Heart left ventricle (tissue), 16 donors: ENCODE measurements at regions of chr9 and their contacts with region 1.

Region 1: DNA sequence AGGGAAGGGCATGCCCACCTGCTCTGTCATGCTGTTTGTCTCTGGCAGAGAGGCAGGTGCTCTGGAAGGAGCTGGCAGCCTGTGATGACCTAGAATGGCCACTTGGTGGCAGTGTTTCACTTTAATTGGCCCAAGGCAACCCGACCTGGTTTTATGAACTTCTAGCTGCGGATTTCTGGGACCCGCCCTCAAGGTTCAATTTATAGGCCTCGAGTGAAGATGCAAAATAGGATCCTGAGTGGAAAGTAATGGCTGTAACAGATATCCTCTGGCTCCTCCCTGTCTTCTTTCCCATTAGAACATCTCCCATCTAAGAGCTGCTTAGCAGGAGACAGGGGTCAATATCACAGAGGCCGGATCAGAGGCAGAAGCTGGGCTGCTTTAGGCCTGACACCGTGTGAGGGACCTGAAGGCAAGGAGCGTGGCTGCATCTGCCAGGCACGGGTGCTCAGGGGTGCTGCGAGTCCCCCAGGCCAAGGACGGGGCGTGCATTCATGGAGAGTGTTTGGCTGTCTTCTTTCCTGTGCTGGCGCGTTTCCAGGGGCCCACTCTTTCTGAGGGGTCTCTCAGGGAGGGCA is 56.7 kb upstream of the SLC28A3 start:
- DNase-seq: peak in 4 of 5 donors; percentile 37 to 63 (median 54)
- ATAC-seq: peak in 3 of 4 donors; percentile 80 to 84 (median 81)
- H3K4me3 ChIP-seq: no peak overlapping the region
- H3K27ac ChIP-seq: no peak overlapping the region
- H3K4me1 ChIP-seq: peaks cover 0 to 9% (median 0%) of the 10 kb centered on the region in 12 donors
- H3K27me3 ChIP-seq: peaks cover 0 to 14% (median 0%) of the 10 kb centered on the region in 9 donors
- CTCF ChIP-seq: peak; percentile 87 to 96 (median 93)
- POLR2A ChIP-seq: no peak

Region 2: DNA sequence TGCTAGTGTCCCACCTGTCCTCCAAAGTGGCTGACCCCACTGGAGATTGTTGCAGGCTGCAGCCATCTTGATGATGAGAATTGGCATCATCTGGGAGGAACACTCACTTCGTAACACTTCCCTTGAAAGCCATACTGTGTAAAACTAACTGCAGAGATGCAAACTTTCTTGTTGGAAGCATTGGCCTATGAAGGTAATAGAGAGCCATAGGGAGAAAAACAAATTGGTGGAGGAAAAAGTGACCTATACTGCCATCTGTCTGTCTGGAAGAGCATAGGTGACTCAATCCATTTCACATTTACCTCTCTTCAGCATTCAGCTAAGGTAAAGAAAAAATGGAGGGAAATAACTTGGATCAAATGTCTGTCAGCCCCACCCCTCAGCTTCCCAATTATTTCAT is 745.7 kb after region 1 on chr9:
- intact Hi-C with region 1: loop called in 6 of 10 experiments (anchors 5 to 10 kb)
- DNase-seq: no peak
- ATAC-seq: no peak
- H3K4me3 ChIP-seq: no peak overlapping the region
- H3K27ac ChIP-seq: no peak overlapping the region
- H3K4me1 ChIP-seq: no peaks in the 10 kb centered on the region
- H3K27me3 ChIP-seq: no peaks in the 10 kb centered on the region
- CTCF ChIP-seq: peak in 11 of 12 donors; percentile 20 to 54 (median 37)
- POLR2A ChIP-seq: no peak

Region 3: DNA sequence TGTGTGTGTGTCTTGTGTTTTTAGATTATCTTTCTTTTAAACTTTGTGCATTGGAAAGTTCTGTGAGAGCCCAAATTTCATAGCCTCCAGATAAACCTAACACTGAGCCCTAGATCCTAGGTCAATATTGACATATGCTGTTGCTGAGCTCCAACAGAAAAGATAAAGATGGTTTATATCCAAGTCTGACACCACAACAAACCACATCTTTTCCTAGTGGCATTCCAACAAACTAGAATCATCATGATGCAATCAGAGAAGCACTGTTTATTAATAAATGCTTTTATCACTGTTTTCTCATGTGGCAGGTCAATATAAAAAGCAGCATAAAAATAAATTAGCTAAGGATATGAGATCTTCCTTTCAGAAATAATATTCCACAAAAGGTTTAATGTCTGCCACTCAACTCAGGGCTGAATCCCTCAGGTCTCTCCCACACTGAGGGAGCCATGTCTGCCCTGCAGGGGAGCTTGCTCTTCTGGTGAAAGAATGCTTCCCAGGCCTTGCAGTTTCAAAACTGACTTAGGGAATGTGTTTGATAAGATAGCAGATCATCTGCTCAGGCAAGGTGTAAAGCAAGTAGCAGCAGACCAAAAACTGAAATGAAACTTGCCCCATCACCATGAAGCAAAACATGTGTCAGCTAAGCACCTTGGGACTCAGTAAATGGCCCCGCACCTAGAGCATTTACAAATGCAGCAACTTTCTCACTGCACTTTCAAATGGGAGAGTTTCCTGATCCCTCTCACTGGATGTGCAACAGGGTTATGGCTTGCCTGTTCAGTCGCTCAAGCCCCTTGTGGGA is 851.5 kb after region 1 on chr9:
- intact Hi-C with region 1: loop called in 1 of 10 experiments (anchors 5 kb)
- DNase-seq: no peak
- ATAC-seq: peak in 2 of 4 donors; percentile 32 to 44
- H3K4me3 ChIP-seq: no peak overlapping the region
- H3K27ac ChIP-seq: no peak overlapping the region
- H3K4me1 ChIP-seq: peaks cover 0 to 7% (median 0%) of the 10 kb centered on the region in 12 donors
- H3K27me3 ChIP-seq: no peaks in the 10 kb centered on the region
- CTCF ChIP-seq: no peak
- POLR2A ChIP-seq: no peak

Region 4: GRCh38 chr9:85258823-85259370 is 861.7 kb after region 1 on chr9:
- intact Hi-C with region 1: loop called in 8 of 10 experiments (anchors 2 to 10 kb)
- DNase-seq: peak in 4 of 5 donors; percentile 22 to 53 (median 45)
- ATAC-seq: peak; percentile 77 to 88 (median 87)
- H3K4me3 ChIP-seq: no peak overlapping the region
- H3K27ac ChIP-seq: no peak overlapping the region
- H3K4me1 ChIP-seq: peaks cover 0 to 6% (median 0%) of the 10 kb centered on the region in 12 donors
- H3K27me3 ChIP-seq: peaks cover 0 to 7% (median 0%) of the 10 kb centered on the region in 9 donors
- CTCF ChIP-seq: peak; percentile 42 to 74 (median 67)
- POLR2A ChIP-seq: no peak

Region 5: GRCh38 chr9:85425153-85425611 is 1027.9 kb after region 1 on chr9:
- intact Hi-C with region 1: loop called in 1 of 10 experiments (anchors 10 kb)
- DNase-seq: peak in 4 of 5 donors; percentile 34 to 54 (median 42)
- ATAC-seq: peak in 2 of 4 donors; percentile 42 to 51
- H3K4me3 ChIP-seq: no peak overlapping the region
- H3K27ac ChIP-seq: no peak overlapping the region
- H3K4me1 ChIP-seq: peaks cover 0 to 3% (median 0%) of the 10 kb centered on the region in 12 donors
- H3K27me3 ChIP-seq: peaks cover 0 to 10% (median 0%) of the 10 kb centered on the region in 9 donors
- CTCF ChIP-seq: peak; percentile 33 to 70 (median 54)
- POLR2A ChIP-seq: no peak

Region 6: DNA sequence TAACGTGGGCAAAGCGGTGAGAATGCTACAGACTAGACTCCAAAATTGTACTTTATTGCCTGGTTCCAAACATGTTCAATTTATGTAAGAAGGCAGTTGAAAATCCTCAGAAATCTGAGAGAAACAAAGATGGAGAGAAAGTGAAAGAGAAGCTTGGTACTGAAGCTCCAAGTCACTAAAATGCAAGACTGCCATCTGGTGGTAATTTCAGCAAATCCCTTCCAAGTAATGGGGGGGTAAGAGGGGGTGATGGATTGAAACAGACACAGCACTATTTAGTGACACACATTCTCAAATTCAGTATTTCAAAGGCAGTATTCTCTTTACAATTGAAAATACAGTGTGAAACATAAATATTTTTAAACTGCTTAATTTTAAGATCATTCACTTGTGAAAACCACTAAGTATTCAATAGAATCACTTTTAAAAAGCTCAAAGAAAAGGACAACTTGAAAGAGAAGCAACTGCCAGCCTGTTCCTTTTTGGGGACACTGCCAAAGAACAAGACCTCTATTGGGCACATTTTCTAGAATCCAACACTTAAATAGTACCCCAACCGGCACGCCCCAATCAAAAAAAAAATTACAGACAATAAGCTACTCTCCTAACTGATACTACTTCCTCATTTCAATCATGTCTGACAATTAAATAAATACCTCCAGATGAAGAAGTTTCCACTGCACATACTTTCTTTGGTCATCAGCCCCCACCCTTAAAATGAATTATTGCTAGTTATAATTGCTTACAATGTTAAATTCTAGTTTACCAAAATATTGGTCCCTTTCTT is 1213.0 kb after region 1 on chr9:
- intact Hi-C with region 1: loop called in 9 of 10 experiments (anchors 2 to 10 kb)
- DNase-seq: no peak
- ATAC-seq: peak in 3 of 4 donors; percentile 64 to 78 (median 73)
- H3K4me3 ChIP-seq: peak overlapping the region in 7 of 12 donors; percentile 5 to 46 (median 31)
- H3K27ac ChIP-seq: peak overlapping the region in 1 of 12 donors; percentile 18
- H3K4me1 ChIP-seq: peaks cover 0 to 7% (median 0%) of the 10 kb centered on the region in 12 donors
- H3K27me3 ChIP-seq: no peaks in the 10 kb centered on the region
- CTCF ChIP-seq: peak; percentile 69 to 90 (median 76)
- POLR2A ChIP-seq: no peak